HepG2 (cell line): ENCODE measurements at regions of chr16 and their contacts with region 1.

Region 1: DNA sequence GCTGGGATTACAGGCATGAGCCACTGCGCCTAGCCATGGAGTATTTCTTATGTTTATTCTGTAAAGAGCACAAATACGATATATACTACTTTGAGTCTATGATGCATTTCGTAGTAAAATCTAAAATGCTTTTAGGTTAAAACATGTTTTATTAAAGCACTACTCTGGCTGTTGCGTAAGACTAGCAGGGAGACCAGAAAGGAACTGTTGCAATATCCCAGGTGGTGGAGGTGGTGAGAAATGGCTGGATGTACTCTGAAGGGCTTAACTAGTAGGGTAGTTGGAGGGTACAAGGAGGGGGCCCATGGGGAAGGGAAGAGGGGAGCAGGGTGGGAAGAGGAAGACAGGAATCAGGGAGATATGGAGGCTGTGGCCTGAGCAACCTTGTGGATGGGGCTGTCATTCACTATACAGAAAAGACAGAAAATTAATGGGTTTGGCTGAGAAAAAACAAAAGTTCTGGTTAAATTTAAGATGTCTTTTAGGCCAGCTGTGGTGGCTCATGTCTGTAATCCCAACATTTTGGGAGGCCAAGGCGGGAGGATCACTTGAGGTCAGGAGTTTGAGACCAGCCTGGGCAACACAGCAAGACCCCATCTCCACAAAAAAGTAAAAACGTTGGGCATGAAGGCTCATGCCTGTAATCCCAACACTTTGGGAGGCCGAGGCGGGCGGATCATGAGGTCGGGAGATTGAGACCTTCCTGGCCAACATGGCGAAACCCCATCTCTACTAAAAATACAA is 35.8 kb downstream of the ST3GAL2 start:
- DNase-seq: peak; percentile 44
- ATAC-seq: peak; percentile 45
- H3K4me3 ChIP-seq: no peak overlapping the region
- H3K27ac ChIP-seq: no peak overlapping the region
- H3K4me1 ChIP-seq: peaks cover 19% of the 10 kb centered on the region
- H3K27me3 ChIP-seq: no peaks in the 10 kb centered on the region
- CTCF ChIP-seq: no peak
- EP300 ChIP-seq: no peak
- POLR2A ChIP-seq: no peak
- RAD21 ChIP-seq: no peak

Region 2: DNA sequence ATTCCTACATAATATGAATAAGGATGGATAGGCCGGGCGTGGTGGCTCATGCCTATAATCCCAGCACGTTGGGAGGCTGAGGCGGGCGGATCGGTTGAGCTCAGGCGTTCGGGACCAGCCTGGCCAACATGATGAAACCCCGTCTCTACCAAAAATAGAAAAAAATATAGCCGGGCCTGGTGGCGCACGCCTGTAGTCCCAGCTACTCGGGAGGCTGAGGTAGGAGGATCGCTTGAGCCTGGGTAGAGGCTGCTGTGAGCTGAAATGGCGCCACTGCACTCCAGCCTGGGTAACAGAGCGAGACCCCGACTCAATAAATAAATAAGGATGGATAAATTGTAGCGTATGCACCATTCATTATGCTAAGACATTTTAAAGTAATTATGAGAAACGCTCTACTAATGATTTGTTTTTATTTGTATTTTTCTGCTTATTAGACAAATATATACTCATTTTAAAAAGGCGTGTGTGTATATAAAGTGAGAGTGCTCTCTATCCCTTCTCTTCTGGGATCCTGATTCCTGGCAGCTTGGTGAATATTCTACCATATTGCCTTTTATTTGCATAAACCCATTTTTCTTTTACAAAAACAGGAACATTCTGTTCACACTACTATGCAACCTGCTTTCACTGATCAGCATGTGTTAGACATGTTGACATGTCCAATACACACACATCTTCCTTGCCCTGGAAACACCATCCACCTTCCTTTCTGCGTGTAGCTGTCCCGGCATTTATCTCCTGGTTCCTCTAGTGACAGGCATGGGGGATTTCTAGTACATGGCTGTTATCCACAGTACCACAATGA is 30.0 kb before region 1 on chr16:
- CTCF ChIA-PET with region 1: no interaction called
- POLR2A ChIA-PET with region 1: no interaction called
- in situ Hi-C with region 1: no loop called
- intact Hi-C with region 1: no loop called
- DNase-seq: no peak
- ATAC-seq: no peak
- H3K4me3 ChIP-seq: no peak overlapping the region
- H3K27ac ChIP-seq: no peak overlapping the region
- H3K4me1 ChIP-seq: no peaks in the 10 kb centered on the region
- H3K27me3 ChIP-seq: no peaks in the 10 kb centered on the region
- CTCF ChIP-seq: no peak
- EP300 ChIP-seq: no peak
- POLR2A ChIP-seq: no peak
- RAD21 ChIP-seq: no peak

Region 3: GRCh38 chr16:70416748-70417616 is 13.9 kb after region 1 on chr16:
- CTCF ChIA-PET with region 1: no interaction called
- POLR2A ChIA-PET with region 1: no interaction called
- in situ Hi-C with region 1: no loop called
- intact Hi-C with region 1: no loop called
- DNase-seq: peak; percentile 58
- ATAC-seq: peak; percentile 81
- H3K4me3 ChIP-seq: no peak overlapping the region
- H3K27ac ChIP-seq: peak overlapping the region; percentile 50
- H3K4me1 ChIP-seq: peaks cover 67% of the 10 kb centered on the region
- H3K27me3 ChIP-seq: no peaks in the 10 kb centered on the region
- CTCF ChIP-seq: peak; percentile 80
- EP300 ChIP-seq: peak in 1 of 2 experiments; percentile 43; a peak in 1 of 4 replicates
- POLR2A ChIP-seq: no peak
- RAD21 ChIP-seq: peak; percentile 77

Region 4: GRCh38 chr16:70438969-70439862 is 36.1 kb after region 1 on chr16 and contains the start of gene ST3GAL2:
- CTCF ChIA-PET with region 1: no interaction called
- POLR2A ChIA-PET with region 1: interaction called, 3 read pairs
- in situ Hi-C with region 1: no loop called
- intact Hi-C with region 1: loop called (anchors 5 kb)
- DNase-seq: peak; percentile 93
- ATAC-seq: peak; percentile 88
- H3K4me3 ChIP-seq: peak within 1 kb of the TSS; percentile 82 to 92 (median 89)
- H3K27ac ChIP-seq: peak within 1 kb of the TSS; percentile 69
- H3K4me1 ChIP-seq: peaks cover 66% of the 10 kb centered on the region
- H3K27me3 ChIP-seq: no peaks in the 10 kb centered on the region; a peak in 1 of 5 replicates
- CTCF ChIP-seq: peak; percentile 27
- EP300 ChIP-seq: peak in 1 of 2 experiments; percentile 54; a peak in 2 of 4 replicates
- POLR2A ChIP-seq: peak; percentile 56 to 72; a peak in 3 of 4 replicates
- RAD21 ChIP-seq: peak; percentile 51
- total RNA-seq, gene ST3GAL2: 17.8 and 24.9 TPM in 2 replicates